ENCODE measurements at regions of chr16 and their contacts with region 1.

Region 1: GRCh38 chr16:72989579-72990551 is 58.1 kb downstream of the ZFHX3 start:
- DNase-seq: peak; percentile 94
- ATAC-seq: peak; percentile 85
- H3K4me3 ChIP-seq: peak overlapping the region; percentile 61
- H3K27ac ChIP-seq: peak overlapping the region; percentile 99
- H3K4me1 ChIP-seq: peaks cover 51% of the 10 kb centered on the region
- H3K27me3 ChIP-seq: no peaks in the 10 kb centered on the region
- CTCF ChIP-seq: no peak

Region 2: DNA sequence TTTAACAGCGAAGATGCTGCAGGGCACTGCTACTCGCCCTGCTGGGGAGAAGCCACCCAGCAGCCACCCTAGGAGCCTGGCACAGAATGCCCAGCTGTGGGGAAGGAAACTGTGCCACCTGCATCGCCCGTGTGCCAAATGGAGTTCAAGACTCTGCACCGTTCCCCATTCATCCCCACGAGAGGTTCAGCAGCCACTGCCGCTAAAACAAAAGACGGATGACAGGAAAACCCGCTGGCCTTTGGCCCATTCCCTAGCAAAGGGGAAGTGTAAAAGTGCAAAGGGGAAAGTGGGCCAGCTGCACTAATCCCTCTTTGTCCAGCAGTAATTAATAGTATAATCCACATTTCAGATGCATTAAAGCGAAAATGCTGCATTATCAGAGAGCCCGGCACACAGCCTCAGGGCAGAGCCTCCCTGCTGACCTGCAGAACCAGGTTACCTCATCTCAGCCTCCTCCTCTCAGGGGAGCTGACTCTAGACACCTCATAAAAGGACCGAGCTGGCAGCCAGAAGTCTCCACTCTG is 20.3 kb after region 1 on chr16:
- CTCF ChIA-PET with region 1: no interaction called
- POLR2A ChIA-PET with region 1: no interaction called
- intact Hi-C with region 1: no loop called
- DNase-seq: peak; percentile 22
- ATAC-seq: no peak
- H3K4me3 ChIP-seq: no peak overlapping the region
- H3K27ac ChIP-seq: no peak overlapping the region
- H3K4me1 ChIP-seq: peaks cover 7% of the 10 kb centered on the region; the same call in 1 of the 2 replicates
- H3K27me3 ChIP-seq: no peaks in the 10 kb centered on the region
- CTCF ChIP-seq: no peak

Region 3: DNA sequence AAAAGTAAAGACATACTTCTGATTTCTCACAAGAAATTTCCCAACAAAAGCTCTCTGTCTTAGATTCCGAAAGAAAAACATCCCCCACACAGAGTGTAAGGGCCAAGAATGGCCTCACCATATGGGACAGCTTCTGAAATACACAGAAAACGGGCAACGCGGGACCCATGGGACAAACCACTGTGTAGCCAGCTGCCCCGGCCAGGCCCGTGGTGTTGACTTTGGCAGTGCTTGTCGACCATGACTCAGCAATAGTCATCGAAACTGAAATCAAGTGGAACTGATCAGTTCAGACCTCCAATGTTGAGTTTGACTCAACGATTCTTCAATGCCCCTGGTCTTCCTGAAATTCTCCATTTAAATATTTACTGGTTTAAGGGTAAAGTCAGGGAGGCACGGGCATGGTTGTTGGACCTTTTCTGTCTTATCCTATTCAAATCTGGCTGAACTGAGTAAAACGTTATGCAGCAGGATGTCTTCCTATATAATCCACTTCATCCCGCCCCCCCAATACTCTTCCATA is 30.6 kb after region 1 on chr16:
- CTCF ChIA-PET with region 1: no interaction called
- POLR2A ChIA-PET with region 1: interaction called, 3 read pairs
- intact Hi-C with region 1: loop called (anchors 1 kb)
- DNase-seq: peak; percentile 94
- ATAC-seq: peak; percentile 87
- H3K4me3 ChIP-seq: peak overlapping the region; percentile 60; the same call in 1 of the 2 replicates
- H3K27ac ChIP-seq: peak overlapping the region; percentile 99
- H3K4me1 ChIP-seq: peaks cover 44% of the 10 kb centered on the region
- H3K27me3 ChIP-seq: no peaks in the 10 kb centered on the region
- CTCF ChIP-seq: no peak

Measured in PC-3 (cell line).